Calu3 (cell line): ENCODE measurements at regions of chr3 and their contacts with region 1.

Region 1: DNA sequence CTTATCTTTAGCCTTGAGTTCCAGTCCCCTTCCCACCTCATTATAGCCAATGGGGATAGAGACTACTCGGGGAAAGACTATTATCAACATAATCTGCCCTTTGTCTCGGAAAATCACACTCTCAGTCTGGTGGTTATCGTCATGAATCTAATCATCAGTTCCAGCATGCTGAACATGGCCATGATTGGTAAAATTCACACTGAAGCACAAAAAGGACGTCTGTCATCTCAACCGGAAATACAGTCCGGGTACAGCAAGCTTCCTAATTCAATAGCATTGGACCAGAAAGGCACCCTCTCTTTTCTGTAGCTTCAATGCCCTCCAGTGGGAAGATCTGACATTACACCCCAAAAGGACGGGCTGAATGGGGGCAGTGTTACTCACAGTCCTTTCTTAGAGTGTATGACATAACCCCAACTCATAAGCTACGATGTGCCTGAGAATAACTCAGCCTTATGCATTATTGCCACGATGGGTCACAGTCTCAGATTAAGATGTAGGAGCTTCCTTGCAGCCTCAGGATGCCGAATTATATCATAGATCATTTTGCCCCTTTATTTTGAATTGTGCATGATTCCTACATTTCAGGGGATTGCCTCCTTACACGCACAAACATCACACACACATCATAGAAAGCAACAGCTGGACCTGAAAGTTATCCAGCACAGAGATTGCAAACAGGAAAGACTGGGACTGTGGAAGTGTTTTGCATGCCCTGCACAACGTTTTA is 390.4 kb upstream of the LMCD1 start:
- DNase-seq: peak; percentile 75
- H3K4me3 Mint-ChIP-seq: peak overlapping the region; percentile 39
- H3K27ac Mint-ChIP-seq: no peak overlapping the region
- H3K4me1 Mint-ChIP-seq: peaks cover 2% of the 10 kb centered on the region
- H3K27me3 Mint-ChIP-seq: no peaks in the 10 kb centered on the region
- CTCF ChIP-seq: peak; percentile 72

Region 2: DNA sequence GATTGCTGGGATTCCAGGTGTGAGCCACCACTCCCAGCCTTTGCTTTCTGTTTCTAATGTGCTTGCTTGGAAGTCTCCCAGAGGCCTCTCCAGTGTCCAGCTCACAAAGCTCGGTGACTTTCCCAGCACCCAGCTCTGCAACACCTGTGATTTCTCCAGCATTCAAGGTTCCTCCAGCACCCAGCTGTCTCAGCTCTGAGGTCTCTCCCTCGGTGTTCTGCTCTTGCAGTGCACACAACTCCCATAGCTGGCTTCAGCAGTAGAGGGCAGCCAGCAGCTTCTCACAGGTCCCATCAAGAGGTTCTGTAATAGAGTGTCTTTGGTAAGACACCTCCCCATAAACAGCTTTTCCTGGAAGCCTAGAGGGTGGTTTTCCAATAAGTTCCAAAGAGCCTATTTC is 1175.3 kb before region 1 on chr3:
- CTCF ChIA-PET with region 1: no interaction called
- intact Hi-C with region 1: loop called (anchors 10 kb)
- DNase-seq: no peak
- H3K4me3 Mint-ChIP-seq: no peak overlapping the region
- H3K27ac Mint-ChIP-seq: no peak overlapping the region
- H3K4me1 Mint-ChIP-seq: no peaks in the 10 kb centered on the region
- H3K27me3 Mint-ChIP-seq: no peaks in the 10 kb centered on the region
- CTCF ChIP-seq: no peak

Region 3: DNA sequence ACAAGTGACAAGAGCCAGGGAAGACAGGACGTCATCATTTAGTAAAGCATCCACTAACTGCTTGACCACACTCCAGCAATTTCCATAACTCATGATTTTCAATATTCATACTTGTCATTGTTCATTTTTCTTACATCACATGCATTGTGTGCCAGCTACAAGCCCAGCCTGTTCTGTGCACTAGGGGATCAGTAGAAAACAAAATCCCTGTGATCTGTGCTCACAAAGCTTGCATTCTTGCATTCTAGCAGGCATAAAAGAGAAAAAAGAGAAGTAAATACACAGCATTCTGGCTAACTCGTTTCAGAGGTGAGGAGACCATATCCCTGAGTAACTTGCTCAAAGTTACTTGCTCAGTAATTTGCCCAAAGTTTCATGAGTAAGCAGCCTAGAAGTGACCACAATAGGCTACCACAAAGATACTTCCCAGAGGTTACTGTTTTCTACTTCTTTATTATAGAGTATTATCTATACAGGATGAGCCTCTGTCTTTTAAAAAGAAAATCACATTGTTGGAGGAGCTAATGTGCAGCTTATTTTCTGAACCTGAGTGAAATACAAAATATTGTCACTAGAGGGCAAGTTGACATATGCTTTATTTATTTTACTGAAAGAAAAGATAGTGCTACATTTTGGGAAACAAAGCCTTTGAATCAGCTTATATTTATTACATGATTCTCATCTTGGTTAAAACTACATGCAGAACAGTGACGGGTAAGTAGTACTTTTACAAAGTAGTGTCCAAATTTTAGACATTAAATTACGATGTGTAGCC is 311.0 kb before region 1 on chr3:
- CTCF ChIA-PET with region 1: interaction called, 10 read pairs
- intact Hi-C with region 1: loop called (anchors 1 kb)
- DNase-seq: no peak
- H3K4me3 Mint-ChIP-seq: no peak overlapping the region
- H3K27ac Mint-ChIP-seq: no peak overlapping the region
- H3K4me1 Mint-ChIP-seq: no peaks in the 10 kb centered on the region
- H3K27me3 Mint-ChIP-seq: no peaks in the 10 kb centered on the region
- CTCF ChIP-seq: no peak

Region 4: DNA sequence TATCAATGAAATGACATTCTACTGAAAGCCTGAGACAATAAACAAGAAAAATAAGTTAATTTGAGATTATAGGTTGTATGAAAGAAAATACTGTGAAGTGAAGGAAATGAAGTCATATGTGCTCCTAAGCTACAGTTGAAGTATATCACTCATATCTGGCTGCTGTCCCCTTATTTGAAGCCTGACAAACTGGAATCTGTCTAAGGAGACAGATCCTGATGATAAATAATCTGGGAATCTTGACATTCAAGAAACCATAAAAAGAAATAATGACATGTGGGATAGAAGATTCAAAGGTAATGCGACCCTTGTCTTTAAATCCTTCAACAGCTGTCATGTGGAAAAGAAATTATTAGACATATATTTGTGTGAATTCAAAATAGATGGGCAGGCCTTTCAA is 34.1 kb before region 1 on chr3:
- CTCF ChIA-PET with region 1: no interaction called
- intact Hi-C with region 1: no loop called
- DNase-seq: no peak
- H3K4me3 Mint-ChIP-seq: no peak overlapping the region
- H3K27ac Mint-ChIP-seq: no peak overlapping the region
- H3K4me1 Mint-ChIP-seq: no peaks in the 10 kb centered on the region
- H3K27me3 Mint-ChIP-seq: no peaks in the 10 kb centered on the region
- CTCF ChIP-seq: no peak

Region 5: GRCh38 chr3:8239718-8240695 is 128.8 kb after region 1 on chr3:
- CTCF ChIA-PET with region 1: interaction called, 3 read pairs
- intact Hi-C with region 1: loop called (anchors 5 kb)
- DNase-seq: peak; percentile 62
- H3K4me3 Mint-ChIP-seq: no peak overlapping the region
- H3K27ac Mint-ChIP-seq: no peak overlapping the region
- H3K4me1 Mint-ChIP-seq: no peaks in the 10 kb centered on the region
- H3K27me3 Mint-ChIP-seq: no peaks in the 10 kb centered on the region
- CTCF ChIP-seq: peak; percentile 36

Region 6: DNA sequence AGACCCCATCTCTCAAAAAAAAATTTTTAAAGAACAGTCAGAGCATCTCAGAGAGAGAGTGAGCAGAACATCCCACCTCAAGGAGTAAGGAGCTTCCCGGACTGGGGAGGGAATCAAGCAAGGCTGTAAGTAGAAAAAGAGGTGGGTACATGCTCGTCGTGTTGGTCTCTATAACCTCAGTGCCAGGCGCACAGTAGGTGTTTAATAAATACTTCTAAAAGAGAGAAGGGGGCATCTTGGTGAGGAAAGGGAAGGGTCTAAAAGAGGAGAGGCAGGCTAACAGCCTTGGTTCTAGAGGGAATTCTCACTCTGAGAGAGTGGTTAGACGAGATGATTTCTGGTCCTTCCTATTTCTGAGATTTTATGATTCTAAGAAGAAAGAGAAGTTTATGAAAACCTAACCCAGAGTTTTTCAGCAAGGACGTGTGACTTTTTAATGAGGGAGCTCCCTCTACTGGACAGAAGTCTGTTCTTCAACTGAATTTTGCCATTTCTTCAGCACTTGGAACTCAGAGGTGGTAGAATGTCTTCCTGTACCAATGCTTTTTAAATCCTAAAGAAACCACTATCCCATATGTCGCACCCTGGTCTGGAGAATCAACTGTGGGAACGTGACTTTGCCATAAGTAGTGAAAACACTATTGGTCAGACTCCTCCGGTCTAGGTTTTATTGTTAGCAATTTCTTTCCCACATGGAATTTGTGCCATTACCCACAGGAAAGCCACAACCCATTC is 190.7 kb after region 1 on chr3:
- CTCF ChIA-PET with region 1: no interaction called
- intact Hi-C with region 1: loop called (anchors 10 kb)
- DNase-seq: peak; percentile 16
- H3K4me3 Mint-ChIP-seq: no peak overlapping the region
- H3K27ac Mint-ChIP-seq: no peak overlapping the region
- H3K4me1 Mint-ChIP-seq: no peaks in the 10 kb centered on the region
- H3K27me3 Mint-ChIP-seq: no peaks in the 10 kb centered on the region
- CTCF ChIP-seq: peak; percentile 45